Heart left ventricle (tissue), 16 donors: ENCODE measurements at regions of chr17 and their contacts with region 1.

Region 1: GRCh38 chr17:20009302-20010098 is at the start of gene SPECC1:
- DNase-seq: peak; percentile 79 to 93 (median 85)
- ATAC-seq: peak in 3 of 4 donors; percentile 45 to 98 (median 97)
- H3K4me3 ChIP-seq: peak within 1 kb of the TSS; percentile 52 to 86 (median 76)
- H3K27ac ChIP-seq: peak within 1 kb of the TSS; percentile 50 to 90 (median 76)
- H3K4me1 ChIP-seq: peaks cover 0 to 20% (median 5%) of the 10 kb centered on the region in 12 donors
- H3K27me3 ChIP-seq: peaks cover 0 to 13% (median 0%) of the 10 kb centered on the region in 9 donors
- CTCF ChIP-seq: peak; percentile 90 to 100 (median 98)
- POLR2A ChIP-seq: peak in 1 of 2 donors; percentile 44
- total RNA-seq, gene SPECC1: 5.1 to 18.4 (median 10.6) TPM

Region 2: GRCh38 chr17:19546289-19547065 is 463.0 kb before region 1 on chr17:
- intact Hi-C with region 1: no loop called
- DNase-seq: peak in 4 of 5 donors; percentile 26 to 68 (median 47)
- ATAC-seq: peak; percentile 56 to 83 (median 79)
- H3K4me3 ChIP-seq: no peak overlapping the region
- H3K27ac ChIP-seq: peak overlapping the region in 5 of 12 donors; percentile 29 to 71 (median 46)
- H3K4me1 ChIP-seq: peaks cover 0 to 30% (median 5%) of the 10 kb centered on the region in 12 donors
- H3K27me3 ChIP-seq: no peaks in the 10 kb centered on the region
- CTCF ChIP-seq: peak in 8 of 12 donors; percentile 11 to 43 (median 28)
- POLR2A ChIP-seq: no peak

Region 3: DNA sequence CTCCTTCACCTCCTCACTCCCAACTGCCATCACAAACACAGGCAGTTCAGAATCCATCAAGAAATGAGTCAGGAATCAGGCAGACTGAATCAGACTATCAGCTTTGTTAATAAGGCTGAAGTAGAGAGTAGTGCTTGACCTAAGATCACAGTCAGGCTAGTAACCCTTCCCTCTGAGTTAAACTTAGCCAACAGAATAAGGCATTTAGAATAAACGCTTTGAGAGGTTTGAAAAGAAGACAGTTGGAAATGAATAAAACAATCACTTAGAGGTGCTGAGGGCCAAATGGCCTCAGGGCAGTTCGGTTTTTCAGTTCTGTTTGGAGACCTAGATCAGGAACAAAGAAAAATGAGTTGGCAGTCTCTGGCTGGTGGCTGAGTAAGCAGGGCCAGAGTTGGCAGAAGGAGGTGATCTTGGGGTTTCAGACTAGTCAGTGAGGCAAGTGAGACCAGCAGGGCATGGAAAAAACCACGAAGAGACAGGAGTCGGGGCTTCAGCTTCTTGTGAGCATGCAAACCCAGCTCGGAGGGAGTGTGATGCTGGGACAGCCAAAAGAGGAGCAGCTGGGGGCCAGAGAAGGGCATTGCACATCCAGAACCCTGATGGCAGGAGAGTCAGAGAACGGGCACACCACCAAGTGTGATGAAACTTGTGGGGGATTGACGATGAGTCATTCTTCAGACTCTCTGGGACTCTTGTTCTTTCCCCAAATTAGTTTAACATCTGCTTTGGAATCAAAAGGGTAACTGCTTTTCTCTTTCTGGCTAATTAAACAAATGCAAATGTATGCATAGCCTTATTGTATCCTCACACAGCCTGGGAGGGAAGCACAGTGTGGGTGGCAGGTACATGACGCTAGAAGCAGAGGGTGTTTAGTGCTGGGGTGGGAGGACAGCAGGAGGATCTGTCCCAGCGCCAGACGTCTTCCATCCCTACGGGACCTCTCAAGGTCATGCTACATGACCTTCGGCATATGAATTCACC is 54.5 kb after region 1 on chr17:
- intact Hi-C with region 1: loop called in 3 of 10 experiments (anchors 5 to 10 kb)
- DNase-seq: peak; percentile 65 to 85 (median 74)
- ATAC-seq: peak; percentile 80 to 89 (median 86)
- H3K4me3 ChIP-seq: peak overlapping the region in 1 of 12 donors; percentile 3
- H3K27ac ChIP-seq: peak overlapping the region; percentile 51 to 79 (median 70)
- H3K4me1 ChIP-seq: peaks cover 0 to 51% (median 17%) of the 10 kb centered on the region in 12 donors
- H3K27me3 ChIP-seq: no peaks in the 10 kb centered on the region
- CTCF ChIP-seq: no peak
- POLR2A ChIP-seq: no peak

Region 4: GRCh38 chr17:20083460-20083859 is 74.0 kb after region 1 on chr17:
- intact Hi-C with region 1: loop called in 1 of 10 experiments (anchors 5 kb)
- DNase-seq: no peak
- ATAC-seq: no peak
- H3K4me3 ChIP-seq: no peak overlapping the region
- H3K27ac ChIP-seq: no peak overlapping the region
- H3K4me1 ChIP-seq: peaks cover 0 to 53% (median 28%) of the 10 kb centered on the region in 12 donors
- H3K27me3 ChIP-seq: no peaks in the 10 kb centered on the region
- CTCF ChIP-seq: no peak
- POLR2A ChIP-seq: no peak

Region 5: GRCh38 chr17:20095336-20096080 is 86.0 kb after region 1 on chr17:
- intact Hi-C with region 1: loop called in 9 of 10 experiments (anchors 1 to 5 kb)
- DNase-seq: peak; percentile 79 to 89 (median 80)
- ATAC-seq: peak; percentile 38 to 67 (median 58)
- H3K4me3 ChIP-seq: peak overlapping the region in 6 of 12 donors; percentile 5 to 24 (median 11)
- H3K27ac ChIP-seq: peak overlapping the region; percentile 55 to 100 (median 90)
- H3K4me1 ChIP-seq: peaks cover 4 to 59% (median 42%) of the 10 kb centered on the region in 12 donors
- H3K27me3 ChIP-seq: no peaks in the 10 kb centered on the region
- CTCF ChIP-seq: peak; percentile 14 to 65 (median 44)
- POLR2A ChIP-seq: peak in 1 of 2 donors; percentile 29

Region 6: GRCh38 chr17:20121359-20122253 is 112.1 kb after region 1 on chr17:
- intact Hi-C with region 1: loop called in 3 of 10 experiments (anchors 5 kb)
- DNase-seq: peak in 4 of 5 donors; percentile 45 to 57 (median 49)
- ATAC-seq: peak; percentile 41 to 80 (median 68)
- H3K4me3 ChIP-seq: no peak overlapping the region
- H3K27ac ChIP-seq: no peak overlapping the region
- H3K4me1 ChIP-seq: peaks cover 0 to 28% (median 7%) of the 10 kb centered on the region in 12 donors
- H3K27me3 ChIP-seq: no peaks in the 10 kb centered on the region
- CTCF ChIP-seq: peak; percentile 76 to 94 (median 88)
- POLR2A ChIP-seq: no peak